Heart right ventricle (tissue), 16 donors: ENCODE measurements at regions of chr9 and their contacts with region 1.

Region 1: GRCh38 chr9:38408719-38409118 is 15.5 kb downstream of the IGFBPL1 start:
- DNase-seq: no peak
- ATAC-seq: no peak
- H3K4me3 ChIP-seq: no peak overlapping the region
- H3K27ac ChIP-seq: no peak overlapping the region
- H3K4me1 ChIP-seq: no peaks in the 10 kb centered on the region
- H3K27me3 ChIP-seq: peaks cover 0 to 57% (median 39%) of the 10 kb centered on the region in 7 donors
- CTCF ChIP-seq: no peak

Region 2: GRCh38 chr9:37746848-37747753 is 661.6 kb before region 1 on chr9:
- intact Hi-C with region 1: loop called in 2 of 10 experiments (anchors 10 kb)
- DNase-seq: peak; percentile 30 to 35
- ATAC-seq: peak in 7 of 8 donors; percentile 47 to 82 (median 76)
- H3K4me3 ChIP-seq: no peak overlapping the region
- H3K27ac ChIP-seq: no peak overlapping the region
- H3K4me1 ChIP-seq: no peaks in the 10 kb centered on the region
- H3K27me3 ChIP-seq: no peaks in the 10 kb centered on the region
- CTCF ChIP-seq: peak; percentile 58 to 91 (median 85)

Region 3: GRCh38 chr9:38371495-38371894 is 37.2 kb before region 1 on chr9:
- intact Hi-C with region 1: loop called in 1 of 10 experiments (anchors 5 kb)
- DNase-seq: no peak
- ATAC-seq: no peak
- H3K4me3 ChIP-seq: no peak overlapping the region
- H3K27ac ChIP-seq: no peak overlapping the region
- H3K4me1 ChIP-seq: no peaks in the 10 kb centered on the region
- H3K27me3 ChIP-seq: peaks cover 0 to 5% (median 0%) of the 10 kb centered on the region in 7 donors
- CTCF ChIP-seq: peak in 3 of 9 donors; percentile 5 to 24 (median 7)

Region 4: DNA sequence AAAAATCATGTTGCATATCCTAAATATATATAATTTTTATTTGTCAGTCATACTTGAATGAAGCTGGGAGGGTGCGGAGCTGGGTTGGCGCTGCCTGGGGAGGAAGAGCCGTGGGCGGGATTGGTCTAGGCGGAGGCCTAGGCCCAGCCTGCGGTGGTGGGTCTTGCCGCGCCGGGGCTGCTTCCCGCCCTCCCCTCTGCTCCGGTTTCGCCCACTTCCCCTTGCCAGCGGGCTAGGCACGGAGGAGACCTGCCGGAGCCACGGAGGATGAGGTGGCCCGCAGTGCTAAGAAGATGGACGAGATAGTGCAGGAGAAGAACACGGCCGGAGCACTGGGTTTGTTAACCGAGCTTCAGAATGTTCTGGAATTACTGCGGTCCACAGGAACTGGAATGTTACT is 69.5 kb after region 1 on chr9:
- intact Hi-C with region 1: no loop called
- DNase-seq: no peak
- ATAC-seq: no peak
- H3K4me3 ChIP-seq: no peak overlapping the region
- H3K27ac ChIP-seq: no peak overlapping the region
- H3K4me1 ChIP-seq: no peaks in the 10 kb centered on the region
- H3K27me3 ChIP-seq: peaks cover 0 to 17% (median 10%) of the 10 kb centered on the region in 7 donors
- CTCF ChIP-seq: no peak